Naive thymus-derived CD4-positive, alpha-beta T cell (primary cell): ENCODE measurements at regions of chr6 and their contacts with region 1.

Region 1: GRCh38 chr6:52317841-52318581 is 33.5 kb upstream of the MCM3 start:
- DNase-seq: no peak
- ATAC-seq: peak; percentile 67
- H3K4me3 ChIP-seq: no peak overlapping the region
- H3K4me3 Mint-ChIP-seq: no peak overlapping the region
- H3K27ac ChIP-seq: no peak overlapping the region
- H3K27ac Mint-ChIP-seq: peak overlapping the region in 2 of 9 donors; percentile 41 to 66
- H3K4me1 ChIP-seq: no peaks in the 10 kb centered on the region
- H3K4me1 Mint-ChIP-seq: peaks cover 13 to 56% (median 41%) of the 10 kb centered on the region in 7 donors
- H3K27me3 ChIP-seq: no peaks in the 10 kb centered on the region
- H3K27me3 Mint-ChIP-seq: no peaks in the 10 kb centered on the region

Region 2: DNA sequence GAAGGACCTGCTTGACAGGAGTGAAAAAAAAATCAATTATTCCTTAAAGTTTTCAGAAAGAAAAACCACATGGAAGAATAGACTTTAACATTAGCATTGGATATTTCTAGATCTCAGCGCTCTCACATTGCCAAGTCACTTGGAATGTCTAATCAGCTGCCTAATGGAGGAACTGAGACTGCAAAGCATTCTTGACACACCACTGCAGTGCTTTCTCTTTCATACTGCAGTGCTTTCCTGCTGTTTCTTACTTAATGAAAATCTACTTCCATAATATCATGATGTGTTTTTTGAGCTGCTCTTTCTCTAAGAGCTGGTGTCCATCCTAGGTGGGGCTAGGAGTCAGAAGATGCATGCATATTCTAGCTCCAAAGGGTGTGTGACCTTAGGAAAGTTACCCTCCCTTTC is 13.0 kb before region 1 on chr6:
- CTCF ChIA-PET with region 1: interaction called, 5 read pairs
- POLR2A ChIA-PET with region 1: interaction called, 3 read pairs
- intact Hi-C with region 1: loop called in 1 of 2 experiments (anchors 2 kb)
- DNase-seq: peak in 1 of 9 donors; percentile 5
- ATAC-seq: peak; percentile 62
- H3K4me3 ChIP-seq: peak overlapping the region; percentile 20
- H3K4me3 Mint-ChIP-seq: peak overlapping the region; percentile 38 to 84 (median 74)
- H3K27ac ChIP-seq: peak overlapping the region; percentile 64
- H3K27ac Mint-ChIP-seq: peak overlapping the region; percentile 68 to 98 (median 96)
- H3K4me1 ChIP-seq: peaks cover 53 to 69% of the 10 kb centered on the region in 2 donors
- H3K4me1 Mint-ChIP-seq: peaks cover 47 to 88% (median 78%) of the 10 kb centered on the region in 7 donors
- H3K27me3 ChIP-seq: no peaks in the 10 kb centered on the region
- H3K27me3 Mint-ChIP-seq: no peaks in the 10 kb centered on the region

Region 3: DNA sequence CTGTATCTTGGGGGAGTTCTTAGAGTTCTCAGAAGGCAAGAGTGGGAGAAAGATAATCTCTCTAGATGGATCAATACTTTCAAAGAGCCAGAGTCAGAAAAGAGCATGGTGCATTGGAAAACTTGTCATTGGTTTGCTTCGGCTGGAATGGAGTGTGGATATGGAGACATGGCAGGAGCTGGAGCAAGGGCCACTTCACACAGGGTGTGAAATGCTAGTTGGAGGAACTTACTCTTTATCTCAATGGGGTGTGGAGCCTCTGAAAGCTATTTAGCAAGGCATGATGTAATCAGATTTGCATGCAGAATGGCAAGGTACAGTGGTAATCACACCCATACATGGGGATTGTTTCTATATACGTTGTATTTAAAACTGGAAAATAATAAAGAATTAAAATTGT is 12.5 kb after region 1 on chr6:
- CTCF ChIA-PET with region 1: interaction called, 4 read pairs
- POLR2A ChIA-PET with region 1: interaction called, 3 read pairs
- intact Hi-C with region 1: loop called in 1 of 2 experiments (anchors 2 kb)
- DNase-seq: no peak
- ATAC-seq: peak; percentile 40
- H3K4me3 ChIP-seq: no peak overlapping the region
- H3K4me3 Mint-ChIP-seq: no peak overlapping the region
- H3K27ac ChIP-seq: no peak overlapping the region
- H3K27ac Mint-ChIP-seq: peak overlapping the region in 5 of 9 donors; percentile 22 to 74 (median 30)
- H3K4me1 ChIP-seq: peaks cover 29 to 43% of the 10 kb centered on the region in 2 donors
- H3K4me1 Mint-ChIP-seq: peaks cover 21 to 67% (median 58%) of the 10 kb centered on the region in 7 donors
- H3K27me3 ChIP-seq: no peaks in the 10 kb centered on the region
- H3K27me3 Mint-ChIP-seq: peaks cover 0 to 7% (median 0%) of the 10 kb centered on the region in 5 donors

Region 4: GRCh38 chr6:52341561-52342260 is 23.7 kb after region 1 on chr6:
- CTCF ChIA-PET with region 1: no interaction called
- POLR2A ChIA-PET with region 1: no interaction called
- intact Hi-C with region 1: no loop called
- DNase-seq: no peak
- ATAC-seq: peak; percentile 38
- H3K4me3 ChIP-seq: no peak overlapping the region
- H3K4me3 Mint-ChIP-seq: peak overlapping the region in 8 of 10 donors; percentile 9 to 53 (median 44)
- H3K27ac ChIP-seq: no peak overlapping the region
- H3K27ac Mint-ChIP-seq: peak overlapping the region in 6 of 9 donors; percentile 13 to 86 (median 70)
- H3K4me1 ChIP-seq: peaks cover 0 to 21% of the 10 kb centered on the region in 2 donors
- H3K4me1 Mint-ChIP-seq: peaks cover 14 to 52% (median 40%) of the 10 kb centered on the region in 7 donors
- H3K27me3 ChIP-seq: no peaks in the 10 kb centered on the region
- H3K27me3 Mint-ChIP-seq: peaks cover 0 to 7% (median 0%) of the 10 kb centered on the region in 5 donors